Right ventricle myocardium inferior (tissue), 1 donor: ENCODE measurements at regions of chr6 and their contacts with region 1.

Region 1: DNA sequence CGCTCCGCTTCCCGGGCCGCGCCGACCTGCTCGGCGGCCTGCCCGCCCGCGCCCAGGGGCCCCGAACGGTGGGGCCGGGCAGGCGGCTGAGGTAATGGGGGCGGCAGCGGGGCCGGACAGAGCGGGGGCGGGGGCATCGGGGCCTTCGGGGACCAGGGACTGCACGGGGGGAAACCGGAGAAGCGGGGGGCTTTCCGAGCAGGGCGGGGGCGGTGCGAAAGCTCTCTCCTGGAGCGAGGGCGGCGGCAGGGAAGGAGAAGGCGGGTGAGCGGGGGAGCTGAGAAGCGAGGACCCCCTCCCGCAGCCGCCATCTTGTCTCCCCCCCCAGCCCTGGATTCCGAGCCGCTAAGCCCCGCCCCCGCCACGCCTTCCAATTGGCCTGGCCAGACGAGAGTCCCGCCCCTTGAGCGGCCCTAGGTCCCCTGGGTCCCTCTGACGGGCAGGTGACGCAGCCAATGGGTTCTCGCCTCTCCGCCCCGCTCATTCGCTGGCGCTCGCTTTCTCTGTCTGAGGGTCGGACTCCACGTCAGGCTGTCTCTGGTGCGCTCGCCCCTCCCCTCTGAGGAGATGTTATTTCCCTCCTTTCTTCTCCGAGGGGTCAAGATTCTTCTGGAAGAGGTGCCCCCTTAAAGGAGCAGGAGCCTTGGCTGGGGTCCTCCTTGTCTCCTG is 470 bp downstream of the BRPF3 start:
- DNase-seq: peak; percentile 99
- ATAC-seq: peak; percentile 98

Region 2: GRCh38 chr6:36123257-36124139 is 73.5 kb before region 1 on chr6:
- intact Hi-C with region 1: loop called (anchors 2 kb)
- DNase-seq: peak; percentile 87
- ATAC-seq: peak; percentile 85

Region 3: GRCh38 chr6:36252005-36252404 is 55.0 kb after region 1 on chr6:
- intact Hi-C with region 1: no loop called
- DNase-seq: no peak
- ATAC-seq: no peak

Region 4: GRCh38 chr6:36280467-36280866 is 83.5 kb after region 1 on chr6:
- intact Hi-C with region 1: no loop called
- DNase-seq: no peak
- ATAC-seq: no peak